Ovary (tissue), 10 donors: ENCODE measurements at regions of chr20 and their contacts with region 1.

Region 1: GRCh38 chr20:41339507-41340326 is 904 bp upstream of the LPIN3 start:
- DNase-seq: peak; percentile 78 to 90 (median 86)
- H3K4me3 ChIP-seq: peak overlapping the region; percentile 45
- H3K27ac ChIP-seq: no peak overlapping the region
- H3K4me1 ChIP-seq: peaks cover 4% of the 10 kb centered on the region
- H3K27me3 ChIP-seq: no peaks in the 10 kb centered on the region
- CTCF ChIP-seq: peak; percentile 99
- EP300 ChIP-seq: no peak
- POLR2A ChIP-seq: peak; percentile 11

Region 2: DNA sequence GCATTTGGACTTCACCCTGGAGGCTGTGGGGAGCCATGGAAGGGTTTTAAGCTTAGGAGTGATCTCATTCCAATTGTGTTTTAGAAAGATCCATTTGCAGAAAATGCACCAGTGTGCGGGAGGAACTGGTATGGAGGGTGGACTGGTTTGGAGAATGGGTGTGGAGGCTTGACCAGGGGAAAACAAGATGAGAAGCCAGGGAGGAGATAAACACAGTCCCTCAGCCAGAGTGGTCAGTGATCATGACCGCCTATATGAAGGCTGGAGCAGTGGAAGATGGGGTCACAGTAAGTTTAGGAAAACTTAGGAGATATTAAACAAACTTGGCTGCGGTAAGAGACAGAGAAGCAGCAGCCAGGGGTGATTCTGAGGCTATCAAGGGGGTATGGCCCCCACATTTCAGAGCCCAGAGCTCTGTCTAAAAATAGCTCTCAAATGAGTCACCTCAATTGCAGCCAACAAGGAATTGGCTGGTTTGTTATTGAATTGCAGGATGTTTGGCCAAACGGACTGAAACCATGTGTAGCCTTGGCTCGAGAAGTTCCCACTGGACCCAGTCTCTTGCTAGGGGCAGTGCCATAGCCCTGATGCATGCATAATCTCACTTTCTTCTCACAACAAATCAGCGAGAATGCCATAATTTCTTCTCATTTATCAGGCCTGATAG is 471.0 kb before region 1 on chr20:
- intact Hi-C with region 1: loop called in 1 of 4 experiments (anchors 10 kb)
- DNase-seq: peak; percentile 44 to 62 (median 58)
- H3K4me3 ChIP-seq: no peak overlapping the region
- H3K27ac ChIP-seq: peak overlapping the region in 1 of 2 donors; percentile 0
- H3K4me1 ChIP-seq: peaks cover 11% of the 10 kb centered on the region
- H3K27me3 ChIP-seq: no peaks in the 10 kb centered on the region
- CTCF ChIP-seq: no peak
- EP300 ChIP-seq: no peak
- POLR2A ChIP-seq: no peak

Region 3: DNA sequence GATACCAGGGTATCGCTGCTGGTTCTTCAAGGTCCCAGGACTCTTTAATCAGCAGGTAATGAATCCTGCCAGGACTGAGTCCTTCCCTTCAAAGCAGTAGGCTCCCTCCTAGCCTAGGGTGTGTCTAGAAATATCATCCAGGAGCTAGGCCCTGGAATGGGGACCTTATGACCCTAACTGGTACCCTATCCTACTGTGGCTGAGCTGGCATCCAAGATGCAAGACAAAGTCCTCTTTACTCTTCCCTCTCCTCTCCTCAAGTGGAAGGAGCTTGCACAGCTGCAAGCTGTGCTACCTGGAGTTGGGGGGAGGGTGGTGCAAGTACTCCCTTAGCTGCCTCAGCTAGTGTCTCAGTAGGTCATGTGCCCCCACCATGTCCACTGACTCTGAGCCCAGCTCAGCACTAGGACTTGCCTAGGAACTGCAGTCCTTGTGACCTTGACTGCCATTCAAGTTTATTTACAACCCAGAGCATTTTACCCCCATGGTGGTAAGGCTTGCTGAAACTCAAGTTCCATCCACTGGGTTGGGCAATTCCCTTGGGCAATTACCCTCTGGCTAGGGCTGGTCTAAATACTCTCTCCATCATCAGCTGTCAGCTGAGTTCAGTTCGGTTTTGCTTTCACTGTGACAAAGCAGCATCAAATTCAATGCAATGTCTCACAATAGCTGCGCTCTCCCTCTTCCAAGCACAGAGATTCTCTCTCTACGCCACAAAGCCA is 359.4 kb before region 1 on chr20:
- intact Hi-C with region 1: loop called in 1 of 4 experiments (anchors 10 kb)
- DNase-seq: no peak
- H3K4me3 ChIP-seq: no peak overlapping the region
- H3K27ac ChIP-seq: no peak overlapping the region
- H3K4me1 ChIP-seq: no peaks in the 10 kb centered on the region
- H3K27me3 ChIP-seq: no peaks in the 10 kb centered on the region
- CTCF ChIP-seq: no peak
- EP300 ChIP-seq: no peak
- POLR2A ChIP-seq: no peak

Region 4: DNA sequence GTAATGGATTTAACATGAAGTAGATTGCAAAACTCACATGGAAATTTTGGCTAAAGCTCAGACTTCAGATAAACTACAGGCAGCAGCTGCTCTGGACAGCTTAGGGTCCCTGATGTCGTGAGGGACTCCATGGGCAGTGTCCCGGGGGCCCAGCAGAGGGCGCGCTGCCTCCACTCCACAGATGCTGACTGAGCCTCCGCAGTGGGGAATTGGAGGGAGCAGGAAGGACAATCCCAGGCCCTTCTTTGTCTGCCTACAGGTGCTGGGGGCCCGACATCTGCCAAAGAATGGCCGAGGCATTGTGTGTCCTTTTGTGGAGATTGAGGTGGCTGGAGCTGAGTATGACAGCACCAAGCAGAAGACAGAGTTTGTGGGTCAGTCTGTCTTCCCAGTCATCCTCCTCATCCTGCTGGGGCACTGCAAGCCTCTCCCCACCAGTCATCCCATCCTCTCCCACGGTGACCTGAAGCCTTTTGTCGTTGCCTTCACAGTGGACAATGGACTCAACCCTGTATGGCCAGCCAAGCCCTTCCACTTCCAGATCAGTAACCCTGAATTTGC is 166.5 kb before region 1 on chr20:
- intact Hi-C with region 1: loop called (anchors 1 to 2 kb)
- DNase-seq: peak; percentile 86 to 94 (median 91)
- H3K4me3 ChIP-seq: no peak overlapping the region
- H3K27ac ChIP-seq: peak overlapping the region in 1 of 2 donors; percentile 41
- H3K4me1 ChIP-seq: peaks cover 5% of the 10 kb centered on the region
- H3K27me3 ChIP-seq: no peaks in the 10 kb centered on the region
- CTCF ChIP-seq: peak; percentile 91 to 98 (median 96)
- EP300 ChIP-seq: no peak
- POLR2A ChIP-seq: no peak

Region 5: DNA sequence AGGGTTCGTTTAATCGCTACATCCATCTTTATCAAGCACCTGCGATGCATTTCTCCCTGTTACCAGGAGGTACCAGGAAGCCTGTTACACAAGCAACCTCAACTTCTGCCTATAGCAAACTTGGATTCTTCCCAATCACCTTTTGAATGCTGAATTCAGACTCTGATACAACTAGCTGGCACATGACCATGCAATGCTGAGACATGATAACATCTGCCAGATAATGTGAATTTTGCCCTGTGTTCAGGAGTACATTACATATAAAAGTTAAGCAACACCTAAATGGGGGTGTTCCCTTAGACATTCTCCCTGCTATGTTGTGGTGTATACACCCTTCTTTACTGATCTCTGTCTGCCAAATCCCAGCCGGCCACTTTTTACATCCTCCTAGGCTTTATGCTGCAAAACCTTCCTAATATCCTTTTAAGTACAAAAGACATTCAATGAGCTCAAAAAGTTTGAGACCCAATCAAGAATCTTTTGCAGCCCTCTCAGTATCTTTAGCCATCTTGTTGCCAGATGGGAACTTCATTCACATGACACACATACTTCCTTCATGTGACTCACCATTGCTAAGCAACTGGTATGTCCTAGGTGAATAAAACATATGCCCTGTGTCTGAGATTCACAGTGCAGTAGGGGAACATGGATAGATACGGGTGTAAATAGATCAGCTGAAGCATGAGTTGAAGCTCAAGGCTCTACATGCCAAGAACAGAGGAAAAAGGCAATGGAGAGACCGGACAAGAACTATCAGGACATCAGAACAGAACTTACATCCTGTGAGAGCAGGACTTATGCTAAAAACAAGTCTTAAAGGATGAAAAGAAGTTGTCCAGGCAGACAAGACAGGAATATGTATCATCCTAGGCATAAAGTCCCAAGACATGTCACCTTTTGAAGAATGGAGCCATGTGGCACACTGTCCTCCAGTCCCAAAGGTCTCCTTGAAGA is 106.5 kb before region 1 on chr20:
- intact Hi-C with region 1: no loop called
- DNase-seq: no peak
- H3K4me3 ChIP-seq: no peak overlapping the region
- H3K27ac ChIP-seq: peak overlapping the region; percentile 21 to 49
- H3K4me1 ChIP-seq: peaks cover 11% of the 10 kb centered on the region
- H3K27me3 ChIP-seq: no peaks in the 10 kb centered on the region
- CTCF ChIP-seq: no peak
- EP300 ChIP-seq: no peak
- POLR2A ChIP-seq: no peak

Region 6: GRCh38 chr20:41249406-41250281 is 90.1 kb before region 1 on chr20:
- intact Hi-C with region 1: loop called (anchors 5 to 10 kb)
- DNase-seq: peak; percentile 78 to 86 (median 85)
- H3K4me3 ChIP-seq: no peak overlapping the region
- H3K27ac ChIP-seq: peak overlapping the region; percentile 79 to 81
- H3K4me1 ChIP-seq: peaks cover 28% of the 10 kb centered on the region
- H3K27me3 ChIP-seq: no peaks in the 10 kb centered on the region
- CTCF ChIP-seq: peak; percentile 8 to 46 (median 19)
- EP300 ChIP-seq: peak; percentile 41
- POLR2A ChIP-seq: no peak

Region 7: DNA sequence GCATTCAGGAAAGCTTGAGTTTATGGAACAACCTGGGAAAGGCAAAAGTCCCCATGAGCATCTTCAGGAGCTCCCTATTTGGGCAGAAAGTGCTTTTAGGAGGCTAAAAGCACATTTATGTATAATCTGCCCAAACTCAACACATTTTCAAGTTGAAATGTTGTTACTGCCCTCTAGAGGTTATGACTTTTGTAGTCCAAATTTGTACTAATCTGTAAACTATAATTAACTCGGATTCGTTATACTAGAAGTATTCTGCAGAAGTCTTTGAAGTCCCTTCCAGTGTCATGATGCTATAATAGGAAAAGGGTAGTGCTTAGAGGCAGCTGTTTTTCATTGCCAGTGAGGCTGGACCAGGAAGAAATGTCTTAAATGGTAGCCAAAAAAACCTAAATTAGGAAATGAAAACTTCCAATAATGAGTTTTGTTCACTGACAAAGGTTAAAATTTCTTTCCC is 71.7 kb after region 1 on chr20:
- intact Hi-C with region 1: loop called in 2 of 4 experiments (anchors 5 kb)
- DNase-seq: no peak
- H3K4me3 ChIP-seq: no peak overlapping the region
- H3K27ac ChIP-seq: no peak overlapping the region
- H3K4me1 ChIP-seq: no peaks in the 10 kb centered on the region
- H3K27me3 ChIP-seq: no peaks in the 10 kb centered on the region
- CTCF ChIP-seq: peak; percentile 15 to 48 (median 25)
- EP300 ChIP-seq: no peak
- POLR2A ChIP-seq: no peak

Region 8: DNA sequence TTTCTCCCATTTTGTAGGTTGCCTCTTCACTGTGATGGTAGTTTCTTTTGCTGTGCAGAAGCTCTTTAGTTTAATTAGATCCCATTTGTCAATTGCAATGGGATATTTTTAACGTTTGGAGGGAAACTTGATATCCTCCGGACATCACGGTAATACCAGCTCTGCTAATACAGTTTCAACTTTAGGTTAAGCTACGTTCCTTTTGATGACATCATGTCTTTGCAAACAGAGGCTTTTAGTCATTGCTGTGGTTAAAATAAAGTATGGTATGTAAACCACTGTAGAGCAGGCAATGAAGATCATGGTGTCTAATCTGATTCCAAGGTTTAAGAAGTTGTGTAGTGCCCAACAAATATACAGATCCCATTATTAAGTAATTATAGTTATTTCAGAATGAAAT is 446.4 kb after region 1 on chr20:
- intact Hi-C with region 1: no loop called
- DNase-seq: no peak
- H3K4me3 ChIP-seq: no peak overlapping the region
- H3K27ac ChIP-seq: no peak overlapping the region
- H3K4me1 ChIP-seq: no peaks in the 10 kb centered on the region
- H3K27me3 ChIP-seq: no peaks in the 10 kb centered on the region
- CTCF ChIP-seq: no peak
- EP300 ChIP-seq: no peak
- POLR2A ChIP-seq: no peak